ENCODE measurements at regions of chr6 and their contacts with region 1.

Region 1: GRCh38 chr6:3929281-3929798 is 80.2 kb downstream of the FAM50B start:
- DNase-seq: no peak
- ATAC-seq: no peak
- H3K4me3 ChIP-seq: no peak overlapping the region
- H3K4me3 Mint-ChIP-seq: no peak overlapping the region
- H3K27ac ChIP-seq: no peak overlapping the region
- H3K27ac Mint-ChIP-seq: no peak overlapping the region
- H3K4me1 ChIP-seq: no peaks in the 10 kb centered on the region
- H3K4me1 Mint-ChIP-seq: no peaks in the 10 kb centered on the region
- H3K27me3 ChIP-seq: peaks cover 0 to 6% of the 10 kb centered on the region in 2 experiments
- H3K27me3 Mint-ChIP-seq: peaks cover 7 to 12% of the 10 kb centered on the region in 2 donors

Region 2: DNA sequence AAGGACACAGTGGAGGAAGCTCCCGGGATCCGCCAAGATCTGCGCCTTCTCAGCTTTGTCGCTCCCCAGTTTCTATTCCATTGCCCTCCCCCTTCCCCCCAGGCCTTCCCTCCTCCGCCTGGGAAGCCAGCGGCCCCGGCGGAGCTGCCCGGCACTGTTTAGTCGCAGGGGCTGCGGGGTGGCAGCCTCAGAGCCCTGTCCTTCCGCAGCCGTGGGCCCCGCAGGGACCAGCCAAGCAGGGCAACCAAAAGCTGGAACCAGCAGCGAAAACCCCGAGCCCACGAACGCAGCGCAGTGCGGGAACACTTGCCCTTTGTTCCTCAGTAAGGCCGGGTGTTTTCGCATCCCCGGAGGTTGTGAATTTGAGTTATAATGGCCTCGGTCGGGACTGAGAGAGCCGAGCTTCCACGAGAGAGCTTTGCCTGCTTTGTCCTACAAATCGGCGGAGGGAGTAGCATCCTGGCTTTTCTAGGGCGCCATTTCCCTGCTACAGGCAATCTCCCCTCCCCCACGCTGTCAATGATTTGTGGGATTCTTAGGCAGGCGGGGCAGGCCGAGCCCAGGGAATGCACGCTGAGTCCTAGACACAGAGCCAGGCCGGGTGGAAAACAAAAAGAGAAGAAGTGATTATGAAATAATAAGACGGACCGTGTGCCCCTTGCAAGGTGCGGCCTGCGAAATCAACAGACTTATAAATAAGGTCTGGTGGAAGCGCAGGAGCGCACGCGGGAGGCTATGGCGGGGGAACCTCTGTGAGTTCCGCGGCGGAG is 697.9 kb before region 1 on chr6:
- CTCF ChIA-PET with region 1: no interaction called
- POLR2A ChIA-PET with region 1: no interaction called
- DNase-seq: peak in 1 of 35 experiments; percentile 30
- ATAC-seq: peak in 1 of 4 experiments; percentile 10
- H3K4me3 ChIP-seq: peak overlapping the region in 1 of 2 donors; percentile 29
- H3K4me3 Mint-ChIP-seq: peak overlapping the region; percentile 36 to 77 (median 47)
- H3K27ac ChIP-seq: no peak overlapping the region
- H3K27ac Mint-ChIP-seq: no peak overlapping the region
- H3K4me1 ChIP-seq: peaks cover 18 to 52% of the 10 kb centered on the region in 2 experiments
- H3K4me1 Mint-ChIP-seq: peaks cover 50 to 55% (median 51%) of the 10 kb centered on the region in 3 donors
- H3K27me3 ChIP-seq: peaks cover 31 to 74% of the 10 kb centered on the region in 2 experiments
- H3K27me3 Mint-ChIP-seq: peaks cover 78 to 88% of the 10 kb centered on the region in 2 donors

Region 3: GRCh38 chr6:3742426-3743344 is 186.7 kb before region 1 on chr6:
- CTCF ChIA-PET with region 1: interaction called, 6 to 22 read pairs
- POLR2A ChIA-PET with region 1: no interaction called
- DNase-seq: peak; percentile 62 to 94 (median 86)
- ATAC-seq: peak; percentile 83 to 96 (median 92)
- H3K4me3 ChIP-seq: no peak overlapping the region
- H3K4me3 Mint-ChIP-seq: peak overlapping the region; percentile 25 to 64 (median 63)
- H3K27ac ChIP-seq: no peak overlapping the region
- H3K27ac Mint-ChIP-seq: peak overlapping the region; percentile 65 to 72
- H3K4me1 ChIP-seq: peaks cover 0 to 11% of the 10 kb centered on the region in 2 experiments
- H3K4me1 Mint-ChIP-seq: peaks cover 14 to 18% (median 18%) of the 10 kb centered on the region in 3 donors
- H3K27me3 ChIP-seq: peaks cover 0 to 28% of the 10 kb centered on the region in 2 experiments
- H3K27me3 Mint-ChIP-seq: peaks cover 14 to 22% of the 10 kb centered on the region in 2 donors

Region 4: GRCh38 chr6:3943331-3943765 is 14.0 kb after region 1 on chr6:
- CTCF ChIA-PET with region 1: no interaction called
- POLR2A ChIA-PET with region 1: no interaction called
- DNase-seq: no peak
- ATAC-seq: no peak
- H3K4me3 ChIP-seq: no peak overlapping the region
- H3K4me3 Mint-ChIP-seq: no peak overlapping the region
- H3K27ac ChIP-seq: no peak overlapping the region
- H3K27ac Mint-ChIP-seq: no peak overlapping the region
- H3K4me1 ChIP-seq: peaks cover 0 to 3% of the 10 kb centered on the region in 2 experiments
- H3K4me1 Mint-ChIP-seq: peaks cover 0 to 5% (median 0%) of the 10 kb centered on the region in 3 donors
- H3K27me3 ChIP-seq: peaks cover 0 to 44% of the 10 kb centered on the region in 2 experiments
- H3K27me3 Mint-ChIP-seq: peaks cover 44 to 45% of the 10 kb centered on the region in 2 donors

Region 5: DNA sequence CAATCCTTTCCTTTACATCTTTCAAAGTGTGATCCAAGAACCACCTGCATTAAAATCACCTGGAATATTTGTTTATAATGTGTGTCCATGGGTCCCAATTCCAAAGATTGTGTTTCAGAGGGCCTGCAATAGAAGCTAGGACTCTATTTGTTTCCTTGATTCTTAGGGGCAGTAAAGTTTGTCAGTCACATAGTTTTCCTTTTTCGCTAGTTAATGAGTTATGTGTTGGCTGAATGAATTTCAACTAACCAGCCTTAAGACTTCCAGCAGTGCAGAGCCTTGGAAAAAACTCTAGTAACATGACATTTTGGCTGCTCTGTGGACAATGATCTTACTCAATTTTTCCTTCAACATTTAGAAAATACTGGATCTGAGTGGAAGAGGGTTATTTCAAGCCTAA is 138.3 kb after region 1 on chr6:
- CTCF ChIA-PET with region 1: no interaction called
- POLR2A ChIA-PET with region 1: interaction called in 1 of 2 experiments, 12 read pairs
- DNase-seq: no peak
- ATAC-seq: no peak
- H3K4me3 ChIP-seq: no peak overlapping the region
- H3K4me3 Mint-ChIP-seq: no peak overlapping the region
- H3K27ac ChIP-seq: no peak overlapping the region
- H3K27ac Mint-ChIP-seq: no peak overlapping the region
- H3K4me1 ChIP-seq: no peaks in the 10 kb centered on the region
- H3K4me1 Mint-ChIP-seq: no peaks in the 10 kb centered on the region
- H3K27me3 ChIP-seq: no peaks in the 10 kb centered on the region
- H3K27me3 Mint-ChIP-seq: no peaks in the 10 kb centered on the region